Gastrocnemius medialis (tissue), 4 donors: ENCODE measurements at regions of chr16 and their contacts with region 1.

Region 1: GRCh38 chr16:70380861-70381603 is 34.3 kb downstream of the DDX19A start:
- DNase-seq: peak; percentile 98
- ATAC-seq: peak; percentile 91 to 93
- H3K4me3 ChIP-seq: peak overlapping the region; percentile 58 to 76 (median 69)
- H3K27ac ChIP-seq: peak overlapping the region; percentile 82 to 96 (median 93)
- H3K4me1 ChIP-seq: peaks cover 7 to 17% of the 10 kb centered on the region in 2 donors
- H3K27me3 ChIP-seq: no peaks in the 10 kb centered on the region
- CTCF ChIP-seq: peak; percentile 15 to 62 (median 42)
- POLR2A ChIP-seq: peak in 1 of 2 donors; percentile 86

Region 2: DNA sequence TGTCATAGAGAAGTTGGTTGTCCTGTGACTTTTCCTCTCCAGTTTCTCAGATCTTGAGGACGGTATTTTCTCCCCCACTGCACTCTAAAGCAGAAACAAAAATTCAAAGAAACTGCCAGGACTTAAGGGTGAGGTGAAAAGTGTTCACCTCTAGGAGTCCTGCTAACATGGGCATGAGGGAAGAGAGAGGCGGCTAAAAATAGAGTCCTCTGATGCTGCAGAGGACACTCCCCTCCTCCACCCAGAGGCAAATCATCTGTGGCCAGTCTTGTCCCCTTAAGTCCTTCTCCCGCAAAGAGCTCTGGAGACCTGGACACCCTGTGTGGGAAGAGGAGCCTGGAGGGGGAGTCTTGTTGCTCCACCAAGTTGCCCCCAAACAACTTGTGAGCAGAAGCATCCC is 39.0 kb before region 1 on chr16:
- in situ Hi-C with region 1: no loop called
- intact Hi-C with region 1: loop called (anchors 1 kb)
- DNase-seq: peak in 1 of 2 donors; percentile 30
- ATAC-seq: peak in 1 of 2 donors; percentile 44
- H3K4me3 ChIP-seq: no peak overlapping the region
- H3K27ac ChIP-seq: peak overlapping the region in 2 of 4 donors; percentile 50 to 69
- H3K4me1 ChIP-seq: peaks cover 10 to 15% of the 10 kb centered on the region in 2 donors
- H3K27me3 ChIP-seq: no peaks in the 10 kb centered on the region
- CTCF ChIP-seq: peak in 1 of 5 experiments; percentile 22
- POLR2A ChIP-seq: no peak

Region 3: GRCh38 chr16:70407811-70408274 is 26.8 kb after region 1 on chr16:
- in situ Hi-C with region 1: no loop called
- intact Hi-C with region 1: no loop called
- DNase-seq: no peak
- ATAC-seq: no peak
- H3K4me3 ChIP-seq: no peak overlapping the region
- H3K27ac ChIP-seq: peak overlapping the region in 3 of 4 donors; percentile 6 to 78 (median 14)
- H3K4me1 ChIP-seq: peaks cover 24 to 33% of the 10 kb centered on the region in 2 donors
- H3K27me3 ChIP-seq: no peaks in the 10 kb centered on the region
- CTCF ChIP-seq: no peak
- POLR2A ChIP-seq: no peak

Region 4: DNA sequence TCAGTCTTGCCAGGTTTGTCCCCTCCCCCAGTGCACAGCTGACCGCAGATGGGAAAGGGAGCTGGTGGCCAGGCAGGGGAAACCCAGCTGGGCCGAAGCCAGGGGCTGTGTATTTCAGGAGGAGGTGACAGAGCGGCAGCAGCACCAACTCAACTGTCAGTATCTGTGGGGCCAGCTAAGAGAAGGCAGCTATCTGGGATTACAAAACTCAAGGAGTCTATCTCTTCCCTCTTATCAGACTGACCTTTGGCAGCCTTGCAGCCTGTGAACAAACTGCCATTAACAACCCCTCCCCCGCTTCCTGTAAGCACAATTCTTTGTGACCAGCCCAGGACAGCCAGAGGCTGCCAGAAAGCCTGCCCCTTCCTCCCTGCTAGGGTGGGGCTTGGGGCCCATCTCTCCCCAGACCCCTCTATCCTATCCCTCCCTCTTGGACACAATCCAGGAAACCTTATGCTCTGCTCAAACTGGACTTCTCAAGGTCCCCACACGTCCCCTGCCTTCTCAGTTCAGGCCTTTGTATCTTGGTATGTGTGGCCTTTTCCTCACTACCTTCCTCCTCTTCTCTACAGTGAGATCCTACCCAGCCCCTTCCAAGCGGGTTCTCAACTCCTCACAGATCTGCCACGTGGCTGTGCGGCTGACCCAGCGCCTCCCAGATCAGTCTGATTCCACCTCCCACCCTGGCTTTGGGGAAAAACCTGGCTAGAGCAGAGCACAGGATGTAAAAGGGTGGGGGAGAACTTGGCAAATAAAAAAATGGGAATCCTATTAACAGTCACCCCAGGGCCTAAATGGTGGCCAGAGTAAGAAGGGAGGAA is 47.4 kb after region 1 on chr16:
- in situ Hi-C with region 1: no loop called
- intact Hi-C with region 1: loop called (anchors 2 kb)
- DNase-seq: peak; percentile 98 to 99
- ATAC-seq: peak; percentile 96 to 97
- H3K4me3 ChIP-seq: peak overlapping the region in 1 of 4 donors; percentile 4
- H3K27ac ChIP-seq: peak overlapping the region; percentile 88 to 95 (median 93)
- H3K4me1 ChIP-seq: peaks cover 60 to 64% of the 10 kb centered on the region in 2 donors
- H3K27me3 ChIP-seq: no peaks in the 10 kb centered on the region
- CTCF ChIP-seq: no peak
- POLR2A ChIP-seq: peak; percentile 55 to 79

Region 5: DNA sequence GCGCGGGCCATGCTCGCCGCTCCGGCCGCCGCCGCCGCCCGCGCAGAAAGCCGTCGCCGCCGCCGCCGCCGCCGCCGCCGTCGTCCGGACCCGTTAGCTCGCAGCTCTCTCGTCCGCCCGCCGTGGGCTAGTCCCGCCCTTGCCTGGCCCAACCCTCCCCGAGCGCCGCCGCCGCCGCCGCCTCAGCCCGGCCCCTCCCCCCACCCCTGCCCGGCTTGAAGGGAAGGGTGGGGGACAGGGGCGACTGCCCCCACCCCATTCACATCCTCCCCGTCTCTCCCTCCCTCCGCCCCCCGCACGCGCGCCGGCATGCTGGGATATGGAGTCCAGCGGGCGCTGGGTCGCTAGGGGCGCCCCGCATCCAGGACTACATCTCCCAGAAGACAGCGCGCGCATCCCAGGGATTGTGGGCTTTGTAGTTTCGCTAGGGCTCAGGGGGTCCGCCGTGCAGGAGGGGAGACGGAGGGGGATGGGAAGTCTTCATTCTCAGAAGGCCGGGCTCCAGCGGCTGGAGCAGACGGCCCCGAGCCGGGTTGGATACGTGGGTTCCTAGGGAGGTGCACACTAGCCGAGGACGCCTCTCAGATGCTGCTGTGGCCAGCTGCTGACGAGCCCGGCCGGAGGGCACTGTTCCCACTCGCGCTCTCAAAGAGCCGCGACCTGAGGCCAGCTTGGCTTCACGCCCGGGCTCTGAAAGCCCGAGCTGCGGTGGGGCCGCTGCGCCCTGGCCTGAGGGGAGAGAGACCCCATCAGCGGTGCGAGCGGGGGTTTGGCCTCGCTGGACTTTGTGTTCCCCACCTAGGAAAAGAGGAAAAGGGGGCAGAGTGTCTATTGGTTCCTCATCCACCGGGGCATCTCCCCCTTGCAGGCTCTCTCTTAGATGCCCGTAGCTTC is 58.2 kb after region 1 on chr16 and contains the start of gene ST3GAL2:
- in situ Hi-C with region 1: no loop called
- intact Hi-C with region 1: loop called (anchors 1 kb)
- DNase-seq: peak; percentile 89 to 94
- ATAC-seq: peak; percentile 89 to 91
- H3K4me3 ChIP-seq: peak within 1 kb of the TSS; percentile 75 to 95 (median 79)
- H3K27ac ChIP-seq: peak within 1 kb of the TSS; percentile 78 to 85 (median 83)
- H3K4me1 ChIP-seq: peaks cover 37 to 46% of the 10 kb centered on the region in 2 donors
- H3K27me3 ChIP-seq: no peaks in the 10 kb centered on the region
- CTCF ChIP-seq: peak in 2 of 5 experiments; percentile 8 to 33
- POLR2A ChIP-seq: peak; percentile 35 to 50
- total RNA-seq, gene ST3GAL2: 12.8 to 27.7 (median 22.1) TPM

Region 6: GRCh38 chr16:70454222-70455034 is 73.4 kb after region 1 on chr16 and contains the start of gene FCSK:
- in situ Hi-C with region 1: no loop called
- intact Hi-C with region 1: loop called (anchors 1 kb)
- DNase-seq: peak; percentile 18 to 61
- ATAC-seq: peak; percentile 91 to 96
- H3K4me3 ChIP-seq: peak within 1 kb of the TSS; percentile 62 to 98 (median 86)
- H3K27ac ChIP-seq: peak within 1 kb of the TSS; percentile 92 to 100 (median 96)
- H3K4me1 ChIP-seq: peaks cover 12 to 20% of the 10 kb centered on the region in 2 donors
- H3K27me3 ChIP-seq: no peaks in the 10 kb centered on the region
- CTCF ChIP-seq: peak in 1 of 5 experiments; percentile 11
- POLR2A ChIP-seq: peak; percentile 57 to 62
- total RNA-seq, gene FCSK: 8.0 to 13.5 (median 11.1) TPM

Region 7: DNA sequence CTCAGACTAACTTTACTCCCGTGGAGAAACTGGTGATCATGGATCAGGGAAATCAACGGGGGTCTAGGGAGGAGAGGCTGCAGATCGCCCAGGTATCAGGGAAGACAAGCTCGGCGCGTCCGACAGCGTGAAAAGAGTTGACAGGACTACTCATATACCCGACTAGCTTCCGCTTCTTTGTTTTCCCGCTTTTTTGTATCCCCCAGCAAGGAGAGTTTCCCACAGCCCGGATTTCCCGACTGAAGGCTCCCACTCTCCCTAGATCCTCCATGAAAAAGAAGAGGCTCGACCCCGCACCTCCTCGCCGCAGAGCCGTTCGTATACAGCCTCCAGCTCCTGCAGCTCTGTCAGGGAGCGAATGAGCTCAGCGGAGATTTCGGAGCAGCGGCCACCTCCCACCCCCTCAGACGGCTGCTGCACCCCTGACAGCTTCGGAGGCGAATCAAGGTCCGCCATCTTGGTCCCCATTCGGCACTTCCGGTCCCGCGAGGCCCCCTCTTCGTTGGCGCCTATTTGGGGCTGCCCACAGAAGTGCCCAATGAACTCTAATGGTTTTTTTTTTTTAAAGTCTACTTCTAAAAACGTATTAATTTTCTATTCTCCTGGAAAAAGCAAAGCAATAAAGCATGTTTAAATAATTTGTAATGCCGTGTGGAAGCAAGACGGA is 142.2 kb after region 1 on chr16 and contains the start of gene COG4:
- in situ Hi-C with region 1: no loop called
- intact Hi-C with region 1: loop called (anchors 5 kb)
- DNase-seq: peak; percentile 81 to 83
- ATAC-seq: peak; percentile 86 to 87
- H3K4me3 ChIP-seq: peak within 1 kb of the TSS; percentile 78 to 99 (median 90)
- H3K27ac ChIP-seq: peak within 1 kb of the TSS; percentile 88 to 95 (median 92)
- H3K4me1 ChIP-seq: peaks cover 35 to 43% of the 10 kb centered on the region in 2 donors
- H3K27me3 ChIP-seq: no peaks in the 10 kb centered on the region
- CTCF ChIP-seq: no peak
- POLR2A ChIP-seq: no peak
- total RNA-seq, gene COG4: 71.8 to 113 (median 82.0) TPM

Region 8: GRCh38 chr16:70610273-70611223 is 229.5 kb after region 1 on chr16:
- in situ Hi-C with region 1: no loop called
- intact Hi-C with region 1: no loop called
- DNase-seq: peak; percentile 90 to 91
- ATAC-seq: peak; percentile 93 to 94
- H3K4me3 ChIP-seq: peak overlapping the region in 2 of 4 donors; percentile 10 to 19
- H3K27ac ChIP-seq: peak overlapping the region; percentile 68 to 89 (median 74)
- H3K4me1 ChIP-seq: peaks cover 19 to 26% of the 10 kb centered on the region in 2 donors
- H3K27me3 ChIP-seq: no peaks in the 10 kb centered on the region
- CTCF ChIP-seq: peak in 1 of 5 experiments; percentile 6
- POLR2A ChIP-seq: peak in 1 of 2 donors; percentile 29